ENCODE measurements at regions of chr2 and their contacts with region 1.

Region 1: DNA sequence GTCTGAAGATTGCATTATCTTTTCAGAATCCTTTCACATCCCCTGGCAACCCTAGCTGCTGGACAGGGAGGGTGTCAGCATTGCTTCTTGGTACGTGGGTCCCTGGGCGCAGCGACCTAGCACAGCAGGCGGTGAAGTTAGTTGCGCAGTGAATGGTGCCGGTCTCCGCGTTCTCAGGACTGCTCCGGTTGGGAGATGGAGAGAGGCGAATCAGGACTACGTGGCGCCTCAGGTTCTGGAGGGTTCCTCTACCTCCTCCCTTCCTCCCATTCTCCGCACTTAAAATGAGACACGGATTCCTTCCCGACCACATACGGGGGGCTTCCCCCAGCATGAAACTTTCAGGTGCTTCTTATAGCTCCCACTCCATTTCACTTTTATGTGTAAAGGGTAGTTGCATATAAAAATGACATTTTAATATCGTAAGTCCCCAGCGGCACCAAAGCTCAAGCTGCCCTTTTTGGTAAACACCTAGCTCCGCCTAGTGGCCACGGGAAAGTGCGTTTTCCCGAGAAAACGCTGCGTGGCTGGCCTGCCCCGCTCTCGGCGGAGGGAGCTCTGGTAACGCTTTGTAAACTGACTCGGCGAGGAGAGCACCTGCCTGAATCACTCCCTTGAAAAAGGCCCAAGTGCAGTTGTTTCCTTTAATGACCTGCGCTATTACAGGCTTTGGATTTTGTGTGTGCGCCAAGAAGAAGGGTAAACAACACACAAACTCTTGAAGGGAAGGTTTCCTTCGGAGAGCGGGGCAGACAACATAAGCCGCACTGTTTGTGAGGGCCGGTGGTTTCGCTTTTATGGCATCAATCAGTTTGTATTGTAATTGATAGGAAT is 32.9 kb upstream of the INHBB start:
- DNase-seq: peak; percentile 77 to 84 (median 80)
- H3K4me3 ChIP-seq: peak overlapping the region; percentile 4 to 75 (median 56)
- H3K27ac ChIP-seq: no peak overlapping the region
- H3K4me1 ChIP-seq: peaks cover 0 to 35% (median 23%) of the 10 kb centered on the region in 4 experiments
- H3K27me3 ChIP-seq: no peaks in the 10 kb centered on the region

Region 2: GRCh38 chr2:120026890-120027289 is 286.2 kb before region 1 on chr2:
- CTCF ChIA-PET with region 1: no interaction called
- POLR2A ChIA-PET with region 1: no interaction called
- DNase-seq: no peak
- H3K4me3 ChIP-seq: no peak overlapping the region
- H3K27ac ChIP-seq: no peak overlapping the region
- H3K4me1 ChIP-seq: no peaks in the 10 kb centered on the region
- H3K27me3 ChIP-seq: no peaks in the 10 kb centered on the region

Region 3: GRCh38 chr2:120109186-120110061 is 203.7 kb before region 1 on chr2:
- CTCF ChIA-PET with region 1: interaction called, 12 read pairs
- POLR2A ChIA-PET with region 1: no interaction called
- DNase-seq: peak; percentile 45 to 70 (median 59)
- H3K4me3 ChIP-seq: no peak overlapping the region
- H3K27ac ChIP-seq: no peak overlapping the region
- H3K4me1 ChIP-seq: peaks cover 7 to 13% (median 9%) of the 10 kb centered on the region in 4 experiments
- H3K27me3 ChIP-seq: no peaks in the 10 kb centered on the region

Region 4: GRCh38 chr2:120231974-120232635 is 81.0 kb before region 1 on chr2:
- CTCF ChIA-PET with region 1: interaction called, 24 read pairs
- POLR2A ChIA-PET with region 1: interaction called, 4 read pairs
- DNase-seq: peak; percentile 75 to 92 (median 90)
- H3K4me3 ChIP-seq: peak overlapping the region; percentile 34 to 84 (median 73)
- H3K27ac ChIP-seq: peak overlapping the region; percentile 38 to 68
- H3K4me1 ChIP-seq: peaks cover 8 to 56% (median 33%) of the 10 kb centered on the region in 4 experiments
- H3K27me3 ChIP-seq: no peaks in the 10 kb centered on the region

Region 5: DNA sequence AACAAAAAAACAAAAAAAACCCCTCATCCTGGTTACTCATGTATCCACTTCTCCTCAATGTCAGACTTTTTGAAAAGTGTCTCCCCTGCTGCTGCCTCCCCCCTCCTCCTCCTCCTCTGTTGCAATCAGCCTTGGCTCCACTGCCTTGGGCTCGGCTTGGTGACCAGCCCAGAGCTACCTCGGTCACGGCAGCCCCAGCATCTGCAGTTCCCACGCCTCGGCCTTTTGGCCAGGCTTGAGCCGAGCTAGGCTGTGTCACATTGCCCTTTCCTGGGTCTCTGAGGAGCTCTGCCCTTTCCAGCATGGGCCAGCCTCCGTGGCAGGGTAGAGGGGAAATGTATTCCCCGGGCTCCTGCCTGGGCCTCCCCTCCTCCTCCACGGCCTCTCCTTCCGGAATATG is 10.1 kb after region 1 on chr2:
- CTCF ChIA-PET with region 1: interaction called, 11 read pairs
- POLR2A ChIA-PET with region 1: no interaction called
- DNase-seq: no peak
- H3K4me3 ChIP-seq: no peak overlapping the region
- H3K27ac ChIP-seq: no peak overlapping the region
- H3K4me1 ChIP-seq: peaks cover 0 to 12% (median 4%) of the 10 kb centered on the region in 4 experiments
- H3K27me3 ChIP-seq: peaks cover 0 to 1% (median 0%) of the 10 kb centered on the region in 5 experiments